ENCODE measurements at regions of chr11 and their contacts with region 1.

Region 1: DNA sequence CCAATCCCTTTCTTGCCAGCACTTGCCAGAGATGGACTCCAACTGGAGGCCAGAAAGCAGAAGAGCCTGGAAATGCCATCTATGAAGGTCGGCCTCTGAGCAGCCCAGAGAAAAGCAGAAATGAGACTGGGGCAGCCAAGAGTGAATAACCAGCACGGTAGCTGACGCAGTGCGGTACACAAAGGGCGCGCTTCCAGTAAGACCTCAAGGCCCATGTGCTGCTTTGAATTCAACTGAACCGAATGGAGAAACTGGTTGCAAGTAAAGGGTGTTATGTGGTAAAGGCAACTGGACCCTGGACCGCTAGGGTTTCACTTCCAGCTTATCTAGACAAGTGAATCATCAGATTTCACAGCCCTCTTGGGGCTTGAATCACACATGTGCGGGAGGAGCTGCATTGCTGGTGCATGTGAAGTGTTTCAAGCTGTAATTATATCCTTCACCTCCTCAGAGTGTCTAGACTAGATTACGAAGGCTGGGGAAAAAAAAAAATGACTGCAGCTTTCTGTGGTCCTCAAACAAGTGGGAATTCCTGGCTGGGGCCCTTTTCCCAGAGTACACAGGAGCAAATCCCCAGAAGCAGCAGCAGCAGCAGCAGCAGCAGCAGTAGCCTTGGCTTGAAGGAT is 128.9 kb downstream of the CCDC34 start:
- DNase-seq: peak; percentile 52 to 82
- ATAC-seq: peak; percentile 94 to 97
- H3K4me3 ChIP-seq: no peak overlapping the region
- H3K27ac ChIP-seq: peak overlapping the region; percentile 72 to 82
- H3K4me1 ChIP-seq: peaks cover 25% of the 10 kb centered on the region
- CTCF ChIP-seq: no peak
- EP300 ChIP-seq: peak; percentile 19 to 24; a peak in 1 of 5 replicates
- POLR2A ChIP-seq: no peak
- RAD21 ChIP-seq: peak in 1 of 2 experiments; percentile 32; a peak in 2 of 5 replicates

Region 2: GRCh38 chr11:27209562-27210005 is 24.6 kb before region 1 on chr11:
- CTCF ChIA-PET with region 1: interaction called, 18 read pairs
- POLR2A ChIA-PET with region 1: interaction called, 11 read pairs
- DNase-seq: peak; percentile 85 to 94
- ATAC-seq: peak; percentile 92
- H3K4me3 ChIP-seq: no peak overlapping the region
- H3K27ac ChIP-seq: peak overlapping the region; percentile 64 to 77; a peak in 5 of 6 replicates
- H3K4me1 ChIP-seq: peaks cover 75% of the 10 kb centered on the region
- CTCF ChIP-seq: no peak
- EP300 ChIP-seq: peak; percentile 53 to 67; a peak in 3 of 5 replicates
- POLR2A ChIP-seq: no peak
- RAD21 ChIP-seq: peak; percentile 16 to 35; a peak in 2 of 5 replicates

Measured in A549 (cell line).